Activated CD8-positive, alpha-beta T cell treated with anti-CD3 and anti-CD28 coated beads, Interleukin-2, amount 10 ng/mL, durations not matched to agents 7 days and 5 days (primary cell): ENCODE measurements at regions of chr1 and their contacts with region 1.

Region 1: DNA sequence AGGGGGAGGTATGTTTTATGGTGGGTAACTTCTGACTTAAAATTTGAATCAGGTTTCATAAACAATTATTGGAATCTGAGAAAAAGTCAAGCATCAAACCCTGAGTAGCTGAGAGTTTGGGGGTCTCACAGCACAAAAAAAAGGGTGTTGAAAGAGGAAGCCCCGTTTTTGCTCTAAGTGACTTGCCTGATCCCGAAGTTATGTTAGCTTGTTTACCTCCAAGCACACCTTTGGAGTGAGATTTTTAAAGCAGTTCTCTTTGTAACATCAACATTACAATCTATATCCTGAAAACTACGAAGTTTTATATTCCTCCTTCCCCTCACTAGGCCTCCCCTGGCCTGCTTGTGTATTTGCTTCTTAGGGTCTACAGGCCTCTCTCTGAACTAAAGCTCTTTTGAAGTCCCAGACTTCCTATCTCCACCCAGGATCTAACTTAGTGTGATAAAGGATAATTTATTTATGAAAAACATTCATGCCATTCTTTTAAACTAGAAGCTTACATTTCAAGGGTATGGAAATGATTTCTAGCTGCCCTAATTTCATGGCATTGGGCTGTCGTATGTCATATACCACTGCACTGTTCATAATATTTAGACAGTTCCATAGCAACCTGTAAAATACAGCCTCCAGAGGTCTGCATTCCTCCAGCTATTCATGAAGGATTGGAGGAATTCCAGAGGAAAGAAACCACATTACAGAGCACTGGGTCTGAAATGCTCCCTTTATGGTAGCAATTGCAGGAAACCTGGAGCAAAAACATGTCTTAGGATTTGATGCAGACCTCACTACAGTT is 36.1 kb upstream of the RGS1 start:
- DNase-seq: no peak
- ATAC-seq: peak; percentile 38
- H3K4me3 Mint-ChIP-seq: peak overlapping the region; percentile 61
- H3K27ac Mint-ChIP-seq: peak overlapping the region; percentile 90
- H3K4me1 Mint-ChIP-seq: peaks cover 30% of the 10 kb centered on the region
- H3K27me3 Mint-ChIP-seq: no peaks in the 10 kb centered on the region

Region 2: GRCh38 chr1:192566657-192567056 is 27.2 kb after region 1 on chr1:
- CTCF ChIA-PET with region 1: interaction called, 12 read pairs
- POLR2A ChIA-PET with region 1: interaction called, 3 read pairs
- DNase-seq: no peak
- ATAC-seq: no peak
- H3K4me3 Mint-ChIP-seq: no peak overlapping the region
- H3K27ac Mint-ChIP-seq: no peak overlapping the region
- H3K4me1 Mint-ChIP-seq: peaks cover 42% of the 10 kb centered on the region
- H3K27me3 Mint-ChIP-seq: no peaks in the 10 kb centered on the region

Region 3: DNA sequence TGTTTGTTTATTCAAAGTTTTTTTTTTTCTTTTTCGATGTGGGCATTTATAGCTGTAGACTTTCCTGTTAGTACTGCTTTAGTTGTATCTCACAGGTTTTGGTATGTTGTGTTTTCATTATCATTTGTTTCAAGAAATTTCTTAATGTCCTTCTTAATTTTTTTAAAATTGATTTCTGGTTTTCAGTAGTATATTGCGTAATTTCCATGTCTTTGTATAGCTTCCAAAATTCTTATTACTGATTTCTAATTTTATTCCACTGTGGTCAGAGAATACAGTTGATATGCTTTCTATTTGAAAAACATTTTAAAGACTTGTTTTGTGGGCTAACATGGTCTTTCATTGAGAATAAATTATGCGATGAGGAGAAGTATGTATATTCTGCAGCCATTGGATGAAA is 1110.1 kb after region 1 on chr1:
- CTCF ChIA-PET with region 1: no interaction called
- POLR2A ChIA-PET with region 1: no interaction called
- DNase-seq: no peak
- ATAC-seq: no peak
- H3K4me3 Mint-ChIP-seq: no peak overlapping the region
- H3K27ac Mint-ChIP-seq: no peak overlapping the region
- H3K4me1 Mint-ChIP-seq: peaks cover 9% of the 10 kb centered on the region
- H3K27me3 Mint-ChIP-seq: no peaks in the 10 kb centered on the region